Heart left ventricle (tissue), 16 donors: ENCODE measurements at regions of chr11 and their contacts with region 1.

Region 1: DNA sequence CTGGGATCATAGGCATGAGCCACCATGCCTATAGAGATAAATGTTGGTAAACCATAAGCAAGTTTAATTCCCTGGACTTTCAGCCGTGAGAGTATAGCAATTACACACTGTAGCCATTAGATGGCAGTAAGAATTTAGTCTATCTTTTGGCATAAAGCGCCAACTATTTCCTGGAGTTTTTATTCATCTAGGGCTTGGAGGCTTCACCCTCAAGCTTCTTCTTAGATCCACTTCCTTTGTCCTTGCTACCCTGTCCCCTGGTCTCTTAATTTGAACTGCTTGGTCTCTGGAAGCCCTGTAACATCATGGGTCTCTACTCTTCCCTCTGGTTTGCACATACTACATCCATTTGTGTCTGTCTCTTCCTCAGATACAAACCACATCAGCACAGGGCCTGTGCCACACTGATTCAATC is 38.2 kb downstream of the OR10A6 start:
- DNase-seq: no peak
- ATAC-seq: peak in 2 of 4 donors; percentile 45 to 56
- H3K4me3 ChIP-seq: no peak overlapping the region
- H3K27ac ChIP-seq: no peak overlapping the region
- H3K4me1 ChIP-seq: peaks cover 0 to 8% (median 0%) of the 10 kb centered on the region in 12 donors
- H3K27me3 ChIP-seq: peaks cover 0 to 3% (median 0%) of the 10 kb centered on the region in 9 donors
- CTCF ChIP-seq: peak; percentile 48 to 79 (median 67)
- POLR2A ChIP-seq: no peak

Region 2: GRCh38 chr11:7986768-7987559 is 94.1 kb after region 1 on chr11 and contains the start of gene EIF3F:
- intact Hi-C with region 1: loop called (anchors 1 to 5 kb)
- DNase-seq: peak; percentile 87 to 96 (median 91)
- ATAC-seq: peak; percentile 99 to 100 (median 100)
- H3K4me3 ChIP-seq: peak within 1 kb of the TSS; percentile 64 to 93 (median 74)
- H3K27ac ChIP-seq: peak within 1 kb of the TSS; percentile 11 to 82 (median 67)
- H3K4me1 ChIP-seq: peaks cover 9 to 36% (median 25%) of the 10 kb centered on the region in 12 donors
- H3K27me3 ChIP-seq: no peaks in the 10 kb centered on the region
- CTCF ChIP-seq: peak; percentile 75 to 96 (median 84)
- POLR2A ChIP-seq: peak in 1 of 2 donors; percentile 52
- total RNA-seq, gene EIF3F: 134 to 181 (median 147) TPM

Region 3: DNA sequence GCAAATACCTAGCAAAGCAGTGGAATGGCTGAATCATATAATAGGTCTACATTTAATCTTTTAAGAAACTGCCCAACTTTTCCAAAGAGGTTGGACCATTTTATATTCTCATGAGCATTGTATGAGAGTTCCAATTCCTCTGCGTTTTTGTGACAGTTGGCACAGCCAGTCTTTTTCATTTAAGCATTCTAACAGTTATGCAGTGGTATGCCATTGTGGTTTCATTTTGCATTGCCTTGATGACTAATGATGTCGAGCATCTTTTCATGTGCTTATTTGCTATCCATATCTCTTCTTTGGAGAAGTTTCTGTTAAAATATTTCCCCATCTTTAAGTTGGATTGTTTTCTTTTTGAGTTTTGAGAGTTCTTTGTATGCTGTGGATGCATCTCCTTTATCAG is 133.0 kb after region 1 on chr11:
- intact Hi-C with region 1: no loop called
- DNase-seq: no peak
- ATAC-seq: no peak
- H3K4me3 ChIP-seq: no peak overlapping the region
- H3K27ac ChIP-seq: no peak overlapping the region
- H3K4me1 ChIP-seq: peaks cover 0 to 12% (median 0%) of the 10 kb centered on the region in 12 donors
- H3K27me3 ChIP-seq: peaks cover 0 to 5% (median 0%) of the 10 kb centered on the region in 9 donors
- CTCF ChIP-seq: no peak
- POLR2A ChIP-seq: no peak

Region 4: DNA sequence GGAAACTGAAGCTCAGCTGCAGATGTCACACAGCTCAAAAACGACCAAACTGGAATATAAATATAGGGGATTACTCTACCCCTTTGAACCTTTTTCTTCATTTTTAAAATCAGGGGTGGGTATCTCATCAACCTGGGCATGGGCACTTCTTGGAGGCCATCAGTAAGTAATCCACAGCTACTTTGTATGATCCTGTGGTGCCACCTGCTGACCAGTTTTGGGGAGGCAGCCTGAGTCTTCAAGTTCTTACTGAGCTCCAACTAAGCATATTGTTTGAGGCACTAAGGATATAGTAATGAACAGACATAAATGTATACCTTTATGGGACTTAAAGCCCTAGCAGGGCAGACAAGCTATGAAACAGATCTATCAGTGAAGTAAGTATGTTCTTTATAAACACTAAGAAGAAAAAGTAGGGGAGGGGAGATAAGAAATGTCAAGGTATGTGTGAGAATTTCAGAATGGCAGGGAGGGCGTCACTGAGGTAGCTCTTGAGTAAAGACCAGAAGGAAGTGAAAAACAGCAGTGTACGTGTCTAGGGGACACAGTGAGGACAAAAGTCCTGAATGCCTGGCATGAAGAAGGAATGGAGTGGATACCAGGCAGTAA is 206.5 kb after region 1 on chr11:
- intact Hi-C with region 1: loop called in 6 of 10 experiments (anchors 5 to 10 kb)
- DNase-seq: peak in 4 of 5 donors; percentile 59 to 73 (median 70)
- ATAC-seq: peak; percentile 47 to 70 (median 56)
- H3K4me3 ChIP-seq: no peak overlapping the region
- H3K27ac ChIP-seq: no peak overlapping the region
- H3K4me1 ChIP-seq: no peaks in the 10 kb centered on the region
- H3K27me3 ChIP-seq: no peaks in the 10 kb centered on the region
- CTCF ChIP-seq: peak; percentile 52 to 89 (median 80)
- POLR2A ChIP-seq: no peak